ENCODE measurements at regions of chr1 and their contacts with region 1.

Region 1: GRCh38 chr1:36285448-36286101 is 20.6 kb upstream of the SH3D21 start:
- DNase-seq: peak; percentile 89
- H3K4me3 Mint-ChIP-seq: no peak overlapping the region
- H3K27ac Mint-ChIP-seq: no peak overlapping the region
- H3K4me1 Mint-ChIP-seq: peaks cover 7% of the 10 kb centered on the region
- H3K27me3 Mint-ChIP-seq: no peaks in the 10 kb centered on the region
- CTCF ChIP-seq: peak; percentile 67

Region 2: GRCh38 chr1:36099681-36100341 is 185.8 kb before region 1 on chr1:
- CTCF ChIA-PET with region 1: interaction called, 5 read pairs
- POLR2A ChIA-PET with region 1: no interaction called
- intact Hi-C with region 1: loop called (anchors 1 kb)
- DNase-seq: peak; percentile 77
- H3K4me3 Mint-ChIP-seq: no peak overlapping the region
- H3K27ac Mint-ChIP-seq: no peak overlapping the region
- H3K4me1 Mint-ChIP-seq: no peaks in the 10 kb centered on the region
- H3K27me3 Mint-ChIP-seq: no peaks in the 10 kb centered on the region
- CTCF ChIP-seq: peak; percentile 77

Region 3: DNA sequence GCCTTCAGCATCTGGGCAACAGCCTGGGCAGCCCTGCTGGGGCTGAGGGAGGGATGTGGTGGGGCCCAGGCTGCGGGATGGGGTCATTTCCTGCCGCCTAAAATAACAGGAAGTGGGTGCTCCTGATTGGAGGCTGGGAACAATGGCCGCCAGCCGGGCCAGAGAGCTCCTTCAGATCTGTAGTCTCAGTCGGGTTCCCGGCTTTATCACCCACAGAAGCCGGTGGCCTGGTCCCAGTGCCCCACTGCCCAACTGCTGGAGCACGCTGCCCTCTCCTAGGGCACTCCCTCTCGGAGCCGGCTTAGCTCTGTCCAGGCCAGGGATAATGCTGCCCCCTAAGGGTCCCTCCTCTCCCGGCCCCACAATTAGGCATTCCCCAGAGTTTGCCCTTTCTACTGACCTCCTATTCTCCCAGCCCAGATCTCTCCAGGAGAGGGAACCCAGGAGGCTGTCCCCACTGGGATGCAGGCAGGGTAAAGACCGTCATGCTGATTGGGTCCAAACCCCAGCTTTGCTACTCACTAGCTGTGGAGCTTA is 124.6 kb before region 1 on chr1:
- CTCF ChIA-PET with region 1: interaction called, 18 read pairs
- POLR2A ChIA-PET with region 1: interaction called, 4 read pairs
- intact Hi-C with region 1: no loop called
- DNase-seq: peak; percentile 59
- H3K4me3 Mint-ChIP-seq: peak overlapping the region; percentile 66
- H3K27ac Mint-ChIP-seq: peak overlapping the region; percentile 94
- H3K4me1 Mint-ChIP-seq: peaks cover 61% of the 10 kb centered on the region
- H3K27me3 Mint-ChIP-seq: no peaks in the 10 kb centered on the region
- CTCF ChIP-seq: peak; percentile 40

Region 4: GRCh38 chr1:36217670-36218069 is 67.9 kb before region 1 on chr1:
- CTCF ChIA-PET with region 1: interaction called, 10 read pairs
- POLR2A ChIA-PET with region 1: interaction called, 3 read pairs
- intact Hi-C with region 1: no loop called
- DNase-seq: peak; percentile 50
- H3K4me3 Mint-ChIP-seq: no peak overlapping the region
- H3K27ac Mint-ChIP-seq: no peak overlapping the region
- H3K4me1 Mint-ChIP-seq: peaks cover 22% of the 10 kb centered on the region
- H3K27me3 Mint-ChIP-seq: no peaks in the 10 kb centered on the region
- CTCF ChIP-seq: peak; percentile 12

Region 5: GRCh38 chr1:36257375-36257767 is 28.2 kb before region 1 on chr1:
- CTCF ChIA-PET with region 1: interaction called, 10 read pairs
- POLR2A ChIA-PET with region 1: no interaction called
- intact Hi-C with region 1: no loop called
- DNase-seq: no peak
- H3K4me3 Mint-ChIP-seq: peak overlapping the region; percentile 3
- H3K27ac Mint-ChIP-seq: peak overlapping the region; percentile 68
- H3K4me1 Mint-ChIP-seq: peaks cover 20% of the 10 kb centered on the region
- H3K27me3 Mint-ChIP-seq: no peaks in the 10 kb centered on the region
- CTCF ChIP-seq: no peak

Region 6: GRCh38 chr1:36269408-36269838 is 16.2 kb before region 1 on chr1:
- CTCF ChIA-PET with region 1: interaction called, 11 read pairs
- POLR2A ChIA-PET with region 1: no interaction called
- intact Hi-C with region 1: no loop called
- DNase-seq: no peak
- H3K4me3 Mint-ChIP-seq: no peak overlapping the region
- H3K27ac Mint-ChIP-seq: no peak overlapping the region
- H3K4me1 Mint-ChIP-seq: peaks cover 5% of the 10 kb centered on the region
- H3K27me3 Mint-ChIP-seq: no peaks in the 10 kb centered on the region
- CTCF ChIP-seq: no peak

Region 7: GRCh38 chr1:36300526-36300925 is 15.0 kb after region 1 on chr1:
- CTCF ChIA-PET with region 1: interaction called, 25 read pairs
- POLR2A ChIA-PET with region 1: interaction called, 8 read pairs
- intact Hi-C with region 1: no loop called
- DNase-seq: no peak
- H3K4me3 Mint-ChIP-seq: no peak overlapping the region
- H3K27ac Mint-ChIP-seq: peak overlapping the region; percentile 67
- H3K4me1 Mint-ChIP-seq: peaks cover 13% of the 10 kb centered on the region
- H3K27me3 Mint-ChIP-seq: no peaks in the 10 kb centered on the region
- CTCF ChIP-seq: no peak